CD4-positive, alpha-beta T cell (primary cell): ENCODE measurements at regions of chr10 and their contacts with region 1.

Region 1: DNA sequence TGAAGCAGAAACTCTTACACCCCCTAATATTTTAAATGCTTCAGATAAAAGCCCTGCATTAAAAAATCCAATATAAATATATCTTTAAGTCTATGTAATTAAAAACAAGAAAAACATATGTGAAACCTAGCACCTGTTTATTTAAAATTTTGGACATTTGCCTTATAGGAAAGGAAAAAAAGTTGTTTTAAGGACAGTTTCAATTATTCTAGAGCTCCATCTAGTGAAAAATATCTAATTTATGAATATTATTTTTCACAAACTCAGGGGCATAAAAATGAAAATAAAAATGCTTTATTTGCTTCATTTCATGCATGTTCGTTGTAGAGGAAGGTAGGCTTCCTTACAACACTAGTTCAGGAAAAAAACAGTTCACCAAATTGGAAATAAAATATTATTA is 26.1 kb downstream of the ENKUR start:
- DNase-seq: no peak
- ATAC-seq: no peak
- H3K4me3 ChIP-seq: no peak overlapping the region
- H3K4me3 Mint-ChIP-seq: no peak overlapping the region
- H3K27ac ChIP-seq: no peak overlapping the region
- H3K27ac Mint-ChIP-seq: no peak overlapping the region
- H3K4me1 ChIP-seq: no peaks in the 10 kb centered on the region
- H3K4me1 Mint-ChIP-seq: no peaks in the 10 kb centered on the region
- H3K27me3 ChIP-seq: no peaks in the 10 kb centered on the region
- H3K27me3 Mint-ChIP-seq: peaks cover 3% of the 10 kb centered on the region
- CTCF ChIP-seq: peak; percentile 55

Region 2: GRCh38 chr10:25047591-25048301 is 57.9 kb after region 1 on chr10:
- CTCF ChIA-PET with region 1: no interaction called
- POLR2A ChIA-PET with region 1: no interaction called
- intact Hi-C with region 1: no loop called
- DNase-seq: no peak
- ATAC-seq: no peak
- H3K4me3 ChIP-seq: no peak overlapping the region
- H3K4me3 Mint-ChIP-seq: no peak overlapping the region
- H3K27ac ChIP-seq: no peak overlapping the region
- H3K27ac Mint-ChIP-seq: no peak overlapping the region
- H3K4me1 ChIP-seq: no peaks in the 10 kb centered on the region
- H3K4me1 Mint-ChIP-seq: no peaks in the 10 kb centered on the region
- H3K27me3 ChIP-seq: peaks cover 4 to 6% of the 10 kb centered on the region in 2 experiments
- H3K27me3 Mint-ChIP-seq: peaks cover 44% of the 10 kb centered on the region
- CTCF ChIP-seq: no peak

Region 3: DNA sequence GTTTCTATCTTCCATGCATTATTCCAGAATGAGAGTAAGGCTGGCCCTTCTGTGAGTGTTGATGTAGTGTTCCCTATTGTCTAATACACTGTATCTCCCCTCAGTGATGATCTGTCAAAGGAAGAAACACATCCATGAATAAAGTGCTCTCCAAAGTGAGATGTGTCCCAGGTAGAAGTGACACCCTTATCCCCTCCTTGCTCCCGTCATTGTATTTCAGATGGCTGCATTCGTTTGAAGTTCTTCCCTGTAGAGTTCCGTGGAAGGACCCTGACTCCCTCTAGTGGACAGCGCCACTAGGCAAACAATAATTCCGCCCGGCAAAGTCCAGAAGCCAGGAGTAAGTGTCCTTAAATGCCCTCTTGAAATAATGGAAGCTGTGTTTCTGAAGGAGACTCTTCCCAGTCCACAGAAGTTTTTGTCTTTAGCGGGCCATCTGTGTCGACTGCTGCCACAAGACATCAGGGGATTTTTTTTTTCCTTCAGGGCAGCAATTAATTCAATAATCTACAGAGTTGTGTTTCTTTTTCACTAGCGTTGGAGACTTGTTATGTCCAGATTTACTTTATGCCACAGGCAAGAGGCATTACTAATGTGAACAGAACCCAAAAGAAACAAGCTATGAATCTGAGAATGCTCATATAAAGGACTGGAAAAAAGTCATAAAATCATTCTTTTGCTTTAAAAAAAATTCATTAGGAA is 91.2 kb after region 1 on chr10:
- CTCF ChIA-PET with region 1: no interaction called
- POLR2A ChIA-PET with region 1: no interaction called
- intact Hi-C with region 1: loop called in 1 of 2 experiments (anchors 5 kb)
- DNase-seq: peak; percentile 27 to 75 (median 46)
- ATAC-seq: peak; percentile 54
- H3K4me3 ChIP-seq: no peak overlapping the region
- H3K4me3 Mint-ChIP-seq: no peak overlapping the region
- H3K27ac ChIP-seq: no peak overlapping the region
- H3K27ac Mint-ChIP-seq: no peak overlapping the region
- H3K4me1 ChIP-seq: no peaks in the 10 kb centered on the region
- H3K4me1 Mint-ChIP-seq: no peaks in the 10 kb centered on the region
- H3K27me3 ChIP-seq: peaks cover under 1 to 5% of the 10 kb centered on the region in 2 experiments
- H3K27me3 Mint-ChIP-seq: peaks cover 14% of the 10 kb centered on the region
- CTCF ChIP-seq: peak; percentile 85

Region 4: GRCh38 chr10:25097669-25098411 is 108.0 kb after region 1 on chr10:
- CTCF ChIA-PET with region 1: no interaction called
- POLR2A ChIA-PET with region 1: no interaction called
- intact Hi-C with region 1: no loop called
- DNase-seq: no peak
- ATAC-seq: no peak
- H3K4me3 ChIP-seq: no peak overlapping the region
- H3K4me3 Mint-ChIP-seq: no peak overlapping the region
- H3K27ac ChIP-seq: no peak overlapping the region
- H3K27ac Mint-ChIP-seq: no peak overlapping the region
- H3K4me1 ChIP-seq: no peaks in the 10 kb centered on the region
- H3K4me1 Mint-ChIP-seq: no peaks in the 10 kb centered on the region
- H3K27me3 ChIP-seq: peaks cover 5 to 8% of the 10 kb centered on the region in 2 experiments
- H3K27me3 Mint-ChIP-seq: peaks cover 54% of the 10 kb centered on the region
- CTCF ChIP-seq: no peak